PC-3 (cell line): ENCODE measurements at regions of chr17 and their contacts with region 1.

Region 1: DNA sequence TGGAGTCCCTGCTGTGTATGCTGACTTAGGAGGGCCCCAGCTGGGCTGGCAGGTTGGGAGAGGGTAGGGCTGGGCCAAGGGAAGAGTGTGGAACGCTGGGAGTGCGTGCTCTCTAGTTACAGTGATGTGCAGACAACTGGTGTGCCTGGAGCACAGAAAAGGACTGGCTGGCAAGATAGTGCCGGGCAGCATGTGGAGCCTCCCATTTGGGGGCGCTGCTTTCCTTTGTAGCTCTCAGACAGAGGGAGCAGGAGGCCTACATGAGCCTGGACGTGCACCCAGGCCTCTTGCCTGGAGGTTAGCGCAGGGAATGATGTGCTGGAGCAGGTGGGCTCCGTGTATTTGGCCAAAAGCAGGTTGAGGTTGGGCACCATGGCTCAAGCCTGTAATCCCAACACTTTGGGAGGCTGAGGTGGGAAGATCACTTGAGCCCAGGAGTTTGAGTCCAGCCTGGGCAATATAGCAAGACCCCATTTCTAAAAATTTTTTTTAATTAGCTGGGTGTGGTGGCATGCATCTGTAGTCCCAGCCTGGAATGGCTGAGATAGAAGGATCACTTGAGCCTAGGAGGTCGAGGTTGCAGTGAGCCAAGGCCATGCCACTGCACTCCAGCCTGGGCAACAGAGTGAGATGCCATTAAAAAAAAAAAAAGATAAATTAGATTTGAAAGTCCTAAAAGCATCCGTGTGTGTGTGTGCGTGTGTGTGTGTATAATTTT is 26.1 kb upstream of the TBX4 start:
- DNase-seq: peak; percentile 60
- ATAC-seq: peak; percentile 37
- H3K4me3 ChIP-seq: no peak overlapping the region
- H3K27ac ChIP-seq: peak overlapping the region; percentile 61
- H3K4me1 ChIP-seq: peaks cover 22% of the 10 kb centered on the region
- H3K27me3 ChIP-seq: no peaks in the 10 kb centered on the region
- CTCF ChIP-seq: peak; percentile 58

Region 2: DNA sequence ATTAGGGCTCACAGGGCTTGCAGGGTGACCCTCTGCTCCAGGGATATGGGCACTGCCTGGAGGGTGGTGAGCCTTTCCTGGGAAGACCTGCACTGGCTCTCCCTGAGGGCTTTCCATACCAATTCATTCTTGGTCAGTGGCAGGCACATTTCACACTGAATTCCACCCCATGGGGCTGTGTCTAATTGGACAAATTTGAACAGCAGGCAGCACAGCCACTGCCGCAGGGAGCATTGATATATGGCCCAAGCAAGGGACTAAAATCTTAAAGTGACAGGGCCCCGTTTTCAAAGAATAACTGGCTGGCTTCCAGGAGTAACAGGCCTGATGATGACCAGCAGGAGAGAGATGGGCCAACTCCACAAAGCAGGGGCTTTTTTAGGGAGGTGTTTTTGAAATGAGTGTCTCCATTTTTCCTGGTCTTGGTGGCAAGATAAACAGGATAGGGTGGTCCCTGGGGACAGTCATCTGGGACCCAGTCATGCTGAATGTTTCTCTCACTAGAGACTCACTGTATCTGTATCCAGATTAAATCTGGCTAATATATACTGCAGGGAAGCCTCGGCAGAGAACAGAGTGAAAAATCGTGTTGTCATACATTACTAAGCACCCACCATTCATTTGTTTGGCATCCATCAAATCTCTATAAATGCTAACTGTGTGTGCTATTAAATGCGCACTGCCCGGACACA is 100.6 kb before region 1 on chr17:
- CTCF ChIA-PET with region 1: no interaction called
- POLR2A ChIA-PET with region 1: no interaction called
- intact Hi-C with region 1: no loop called
- DNase-seq: peak; percentile 82
- ATAC-seq: peak; percentile 89
- H3K4me3 ChIP-seq: no peak overlapping the region
- H3K27ac ChIP-seq: peak overlapping the region; percentile 71
- H3K4me1 ChIP-seq: peaks cover 26% of the 10 kb centered on the region
- H3K27me3 ChIP-seq: no peaks in the 10 kb centered on the region
- CTCF ChIP-seq: no peak

Region 3: GRCh38 chr17:61376931-61377838 is 49.0 kb before region 1 on chr17:
- CTCF ChIA-PET with region 1: no interaction called
- POLR2A ChIA-PET with region 1: no interaction called
- intact Hi-C with region 1: no loop called
- DNase-seq: no peak
- ATAC-seq: no peak
- H3K4me3 ChIP-seq: no peak overlapping the region
- H3K27ac ChIP-seq: no peak overlapping the region
- H3K4me1 ChIP-seq: no peaks in the 10 kb centered on the region
- H3K27me3 ChIP-seq: no peaks in the 10 kb centered on the region
- CTCF ChIP-seq: no peak

Region 4: DNA sequence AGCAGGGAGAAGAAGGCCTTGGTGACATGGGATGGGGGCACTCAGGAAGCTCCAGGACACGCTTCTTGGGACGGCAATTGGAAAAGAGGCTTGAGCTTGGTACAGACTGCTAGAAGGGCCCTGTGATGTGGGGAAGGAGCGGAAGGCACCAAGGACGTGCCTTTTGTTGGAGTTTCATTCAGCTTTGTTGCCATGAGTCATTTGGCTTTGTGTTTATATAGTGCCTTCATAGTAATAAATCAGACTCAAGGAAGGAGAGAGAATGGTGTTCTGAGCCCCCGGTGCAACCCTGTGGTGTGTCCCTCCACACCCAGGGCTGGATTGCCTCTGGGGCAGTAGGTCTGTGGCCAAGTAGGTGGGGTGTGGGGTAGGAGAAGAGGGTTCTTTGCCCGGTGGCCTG is 18.7 kb after region 1 on chr17:
- CTCF ChIA-PET with region 1: interaction called, 10 read pairs
- POLR2A ChIA-PET with region 1: no interaction called
- intact Hi-C with region 1: no loop called
- DNase-seq: peak; percentile 88
- ATAC-seq: peak; percentile 96
- H3K4me3 ChIP-seq: no peak overlapping the region
- H3K27ac ChIP-seq: peak overlapping the region; percentile 33
- H3K4me1 ChIP-seq: peaks cover 12% of the 10 kb centered on the region
- H3K27me3 ChIP-seq: no peaks in the 10 kb centered on the region
- CTCF ChIP-seq: no peak

Region 5: GRCh38 chr17:61551255-61551742 is 125.1 kb after region 1 on chr17:
- CTCF ChIA-PET with region 1: interaction called, 3 read pairs
- POLR2A ChIA-PET with region 1: no interaction called
- intact Hi-C with region 1: loop called (anchors 2 kb)
- DNase-seq: peak; percentile 84
- ATAC-seq: peak; percentile 94
- H3K4me3 ChIP-seq: no peak overlapping the region
- H3K27ac ChIP-seq: no peak overlapping the region
- H3K4me1 ChIP-seq: peaks cover 1% of the 10 kb centered on the region
- H3K27me3 ChIP-seq: no peaks in the 10 kb centered on the region
- CTCF ChIP-seq: peak; percentile 94

Region 6: GRCh38 chr17:61556224-61557188 is 130.3 kb after region 1 on chr17:
- CTCF ChIA-PET with region 1: interaction called, 4 read pairs
- POLR2A ChIA-PET with region 1: interaction called, 21 read pairs
- intact Hi-C with region 1: loop called (anchors 2 kb)
- DNase-seq: peak; percentile 28
- ATAC-seq: peak; percentile 72
- H3K4me3 ChIP-seq: peak overlapping the region; percentile 39
- H3K27ac ChIP-seq: no peak overlapping the region
- H3K4me1 ChIP-seq: peaks cover 8% of the 10 kb centered on the region
- H3K27me3 ChIP-seq: no peaks in the 10 kb centered on the region
- CTCF ChIP-seq: no peak

Region 7: GRCh38 chr17:61574542-61575174 is 148.5 kb after region 1 on chr17:
- CTCF ChIA-PET with region 1: interaction called, 10 read pairs
- POLR2A ChIA-PET with region 1: no interaction called
- intact Hi-C with region 1: no loop called
- DNase-seq: peak; percentile 89
- ATAC-seq: peak; percentile 97
- H3K4me3 ChIP-seq: peak overlapping the region; percentile 23; the same call in 1 of the 2 replicates
- H3K27ac ChIP-seq: peak overlapping the region; percentile 59
- H3K4me1 ChIP-seq: peaks cover 26% of the 10 kb centered on the region
- H3K27me3 ChIP-seq: no peaks in the 10 kb centered on the region
- CTCF ChIP-seq: peak; percentile 80